SK-N-SH (cell line): ENCODE measurements at regions of chr6 and their contacts with region 1.

Region 1: DNA sequence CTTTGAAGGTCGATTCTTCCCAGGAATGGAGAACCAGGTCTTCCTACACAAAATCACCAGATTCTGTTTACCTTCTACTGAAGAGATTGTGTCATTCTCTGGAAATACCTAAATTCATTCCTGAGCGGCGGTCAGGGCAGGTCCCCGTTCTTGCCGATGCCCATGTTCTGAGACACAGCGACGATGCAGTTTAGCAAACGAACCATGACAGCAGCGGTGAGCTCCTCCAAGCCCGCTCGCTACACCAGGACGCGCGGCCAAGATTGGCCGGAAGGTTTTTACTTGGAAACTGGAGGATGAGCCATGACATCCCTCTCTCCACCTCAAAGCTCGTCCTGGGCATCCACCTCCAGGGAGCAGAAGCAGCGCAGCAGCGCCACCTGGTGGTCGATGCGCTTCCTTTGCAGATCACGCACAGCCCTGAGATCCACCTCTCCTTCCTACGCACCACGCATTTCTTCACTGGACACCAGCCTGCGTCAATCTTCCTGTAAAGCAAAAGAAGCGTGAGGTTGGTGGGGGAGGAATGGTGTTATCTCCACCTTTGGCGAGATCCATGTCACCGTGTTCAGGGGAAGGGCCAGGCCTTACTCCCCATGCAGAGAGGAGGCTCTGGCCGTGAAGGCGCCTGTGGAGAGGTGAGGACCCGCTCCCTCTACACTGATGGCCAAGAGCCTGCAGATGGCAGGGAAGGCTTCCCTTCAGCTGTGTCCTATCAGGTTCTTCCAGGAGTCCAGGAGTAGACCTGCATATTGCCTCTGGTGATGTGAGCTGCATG is 9.9 kb upstream of the HLA-B start:
- DNase-seq: peak; percentile 84
- H3K4me3 ChIP-seq: peak overlapping the region; percentile 28 to 58; a peak in 3 of 4 replicates
- H3K27ac ChIP-seq: no peak overlapping the region
- H3K4me1 ChIP-seq: peaks cover 0 to 2% of the 10 kb centered on the region in 2 experiments; a peak in 1 of 4 replicates
- H3K27me3 ChIP-seq: peaks cover 43% of the 10 kb centered on the region
- CTCF ChIP-seq: peak; percentile 92
- EP300 ChIP-seq: no peak
- RAD21 ChIP-seq: peak; percentile 88

Region 2: DNA sequence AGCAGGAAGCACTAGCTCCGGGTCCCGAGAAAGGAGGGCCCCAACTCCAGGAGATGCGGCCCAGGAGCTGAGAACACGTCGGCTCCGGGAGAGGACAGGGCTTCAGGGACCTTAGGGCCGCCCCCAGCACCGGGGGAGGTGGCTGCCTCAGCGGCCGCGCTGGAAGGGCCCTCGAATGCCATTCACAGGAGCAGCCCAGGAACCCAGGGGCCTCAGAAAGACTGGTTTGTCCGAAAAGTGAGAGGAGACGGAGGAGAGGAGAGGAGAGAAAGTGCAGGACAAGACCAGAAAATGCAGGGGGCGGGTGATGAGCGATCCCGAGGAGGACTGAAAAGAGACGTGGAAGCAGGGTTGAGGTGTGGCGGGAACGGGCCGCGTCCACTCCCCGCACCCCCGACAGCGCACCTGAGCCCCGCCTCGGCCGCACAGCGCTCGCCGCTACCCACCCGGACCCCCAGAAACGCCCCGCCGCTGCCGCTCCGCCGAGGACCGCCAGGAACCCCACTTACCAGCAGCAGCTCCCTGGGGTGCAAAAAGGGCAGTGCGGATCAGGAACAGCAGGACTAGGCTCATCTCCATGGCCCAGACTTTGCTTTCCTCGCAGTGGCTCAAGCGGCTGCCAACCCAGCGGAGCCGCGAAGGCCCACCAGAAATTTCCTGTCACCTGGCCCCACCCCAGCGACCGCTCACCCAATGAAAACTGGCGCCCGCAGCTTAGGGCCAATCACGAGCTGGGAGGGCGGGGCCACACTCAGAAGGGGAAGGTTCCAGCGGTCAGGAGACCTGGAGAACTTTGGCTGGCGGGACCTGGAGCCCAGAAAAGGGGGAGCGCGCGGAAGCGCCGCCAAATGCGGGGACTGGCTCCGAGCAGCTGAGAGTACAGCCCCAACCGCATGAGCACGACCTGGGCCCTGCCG is 1618.2 kb before region 1 on chr6:
- CTCF ChIA-PET with region 1: no interaction called
- POLR2A ChIA-PET with region 1: no interaction called
- DNase-seq: peak; percentile 91
- H3K4me3 ChIP-seq: peak overlapping the region; percentile 44 to 56
- H3K27ac ChIP-seq: no peak overlapping the region
- H3K4me1 ChIP-seq: peaks cover 0 to 12% of the 10 kb centered on the region in 2 experiments; a peak in 1 of 4 replicates
- H3K27me3 ChIP-seq: peaks cover 49% of the 10 kb centered on the region
- CTCF ChIP-seq: no peak
- EP300 ChIP-seq: no peak
- RAD21 ChIP-seq: no peak

Region 3: GRCh38 chr6:31128093-31128676 is 238.7 kb before region 1 on chr6:
- CTCF ChIA-PET with region 1: interaction called, 16 read pairs
- POLR2A ChIA-PET with region 1: no interaction called
- DNase-seq: peak; percentile 60
- H3K4me3 ChIP-seq: no peak overlapping the region; a peak in 1 of 4 replicates
- H3K27ac ChIP-seq: no peak overlapping the region
- H3K4me1 ChIP-seq: peaks cover 0 to 6% of the 10 kb centered on the region in 2 experiments; a peak in 2 of 4 replicates
- H3K27me3 ChIP-seq: no peaks in the 10 kb centered on the region
- CTCF ChIP-seq: peak; percentile 73
- EP300 ChIP-seq: no peak
- RAD21 ChIP-seq: peak; percentile 39

Region 4: DNA sequence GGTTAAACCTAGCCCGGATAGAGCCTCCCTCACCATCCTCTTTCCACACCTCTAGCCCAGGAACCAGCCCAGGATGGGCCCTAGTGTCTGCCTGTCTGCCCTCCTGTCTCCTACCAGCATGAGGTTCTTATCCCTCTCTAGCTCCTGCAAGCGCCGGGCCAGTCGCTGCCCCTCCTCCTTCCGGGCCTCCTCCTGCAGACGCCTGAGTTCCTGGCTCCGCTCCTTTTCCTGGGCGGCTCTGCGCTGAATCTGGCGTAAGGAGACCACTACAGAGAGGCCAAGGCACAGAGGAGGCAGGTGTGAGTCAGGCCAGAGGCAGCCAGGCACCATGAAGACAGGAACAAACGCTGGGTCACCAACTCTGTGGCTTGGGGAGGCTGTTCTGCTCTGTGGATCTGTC is 223.7 kb before region 1 on chr6:
- CTCF ChIA-PET with region 1: interaction called, 63 read pairs
- POLR2A ChIA-PET with region 1: no interaction called
- DNase-seq: no peak
- H3K4me3 ChIP-seq: no peak overlapping the region
- H3K27ac ChIP-seq: no peak overlapping the region
- H3K4me1 ChIP-seq: peaks cover 0 to 11% of the 10 kb centered on the region in 2 experiments; a peak in 1 of 4 replicates
- H3K27me3 ChIP-seq: no peaks in the 10 kb centered on the region
- CTCF ChIP-seq: no peak
- EP300 ChIP-seq: no peak
- RAD21 ChIP-seq: no peak

Region 5: GRCh38 chr6:31197559-31198305 is 169.2 kb before region 1 on chr6:
- CTCF ChIA-PET with region 1: interaction called, 43 read pairs
- POLR2A ChIA-PET with region 1: no interaction called
- DNase-seq: peak; percentile 61
- H3K4me3 ChIP-seq: peak overlapping the region; percentile 71 to 100
- H3K27ac ChIP-seq: peak overlapping the region; percentile 58 to 89
- H3K4me1 ChIP-seq: peaks cover 0 to 5% of the 10 kb centered on the region in 2 experiments; a peak in 1 of 4 replicates
- H3K27me3 ChIP-seq: no peaks in the 10 kb centered on the region
- CTCF ChIP-seq: no peak
- EP300 ChIP-seq: no peak
- RAD21 ChIP-seq: no peak

Region 6: GRCh38 chr6:31205638-31206037 is 161.2 kb before region 1 on chr6:
- CTCF ChIA-PET with region 1: interaction called, 11 read pairs
- POLR2A ChIA-PET with region 1: no interaction called
- DNase-seq: no peak
- H3K4me3 ChIP-seq: no peak overlapping the region
- H3K27ac ChIP-seq: no peak overlapping the region
- H3K4me1 ChIP-seq: peaks cover 2 to 7% of the 10 kb centered on the region in 2 experiments; a peak in 2 of 4 replicates
- H3K27me3 ChIP-seq: peaks cover 6% of the 10 kb centered on the region; the same call in 1 of the 2 replicates
- CTCF ChIP-seq: no peak
- EP300 ChIP-seq: no peak
- RAD21 ChIP-seq: no peak

Region 7: DNA sequence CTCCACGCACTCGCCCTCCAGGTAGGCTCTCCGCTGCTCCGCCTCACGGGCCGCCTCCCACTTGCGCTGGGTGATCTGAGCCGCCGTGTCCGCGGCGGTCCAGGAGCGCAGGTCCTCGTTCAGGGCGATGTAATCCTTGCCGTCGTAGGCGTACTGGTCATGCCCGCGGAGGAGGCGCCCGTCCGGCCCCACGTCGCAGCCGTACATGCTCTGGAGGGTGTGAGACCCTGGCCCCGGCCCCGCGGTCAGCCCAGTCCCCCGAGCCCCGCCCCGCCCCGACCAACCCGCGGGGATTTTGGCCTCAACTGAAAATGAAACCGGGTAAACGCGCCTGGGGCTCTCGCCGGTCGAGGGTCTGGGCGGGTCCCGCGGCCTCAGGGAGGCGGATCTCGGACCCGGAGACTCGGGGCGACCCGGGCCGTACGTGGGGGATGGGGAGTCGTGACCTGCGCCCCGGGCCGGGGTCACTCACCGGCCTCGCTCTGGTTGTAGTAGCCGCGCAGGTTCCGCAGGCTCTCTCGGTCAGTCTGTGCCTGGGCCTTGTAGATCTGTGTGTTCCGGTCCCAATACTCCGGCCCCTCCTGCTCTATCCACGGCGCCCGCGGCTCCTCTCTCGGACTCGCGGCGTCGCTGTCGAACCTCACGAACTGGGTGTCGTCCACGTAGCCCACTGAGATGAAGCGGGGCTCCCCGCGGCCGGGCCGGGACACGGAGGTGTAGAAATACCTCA is 10.5 kb before region 1 on chr6:
- CTCF ChIA-PET with region 1: interaction called, 15 read pairs
- POLR2A ChIA-PET with region 1: no interaction called
- DNase-seq: peak; percentile 20
- H3K4me3 ChIP-seq: peak overlapping the region in 1 of 2 experiments; percentile 49; a peak in 2 of 4 replicates
- H3K27ac ChIP-seq: no peak overlapping the region
- H3K4me1 ChIP-seq: no peaks in the 10 kb centered on the region; a peak in 1 of 4 replicates
- H3K27me3 ChIP-seq: no peaks in the 10 kb centered on the region; the same call in 1 of the 2 replicates
- CTCF ChIP-seq: no peak
- EP300 ChIP-seq: no peak
- RAD21 ChIP-seq: no peak

Region 8: DNA sequence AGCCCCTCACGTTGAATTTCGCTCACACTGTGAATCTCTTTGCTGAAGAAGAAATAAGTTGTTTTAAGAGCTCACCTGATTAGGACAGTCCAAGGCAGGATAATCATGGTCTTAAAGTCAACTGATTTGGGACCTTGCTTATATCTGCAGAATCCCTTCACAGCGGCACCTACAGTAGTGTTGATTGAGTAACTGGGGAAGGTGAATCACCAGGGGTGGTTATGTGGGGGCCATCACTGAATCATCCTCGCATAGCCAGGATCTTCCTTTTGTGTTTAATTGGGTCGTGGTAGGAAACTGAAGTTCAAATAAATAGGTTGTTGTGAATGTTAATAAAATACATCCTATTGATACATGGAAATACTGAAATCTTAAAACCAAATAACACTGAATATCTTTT is 16.3 kb after region 1 on chr6:
- CTCF ChIA-PET with region 1: interaction called, 36 read pairs
- POLR2A ChIA-PET with region 1: no interaction called
- DNase-seq: no peak
- H3K4me3 ChIP-seq: no peak overlapping the region
- H3K27ac ChIP-seq: no peak overlapping the region
- H3K4me1 ChIP-seq: no peaks in the 10 kb centered on the region
- H3K27me3 ChIP-seq: peaks cover 82% of the 10 kb centered on the region
- CTCF ChIP-seq: no peak
- EP300 ChIP-seq: no peak
- RAD21 ChIP-seq: no peak